Natural killer cell (primary cell): ENCODE measurements at regions of chr14 and their contacts with region 1.

Region 1: DNA sequence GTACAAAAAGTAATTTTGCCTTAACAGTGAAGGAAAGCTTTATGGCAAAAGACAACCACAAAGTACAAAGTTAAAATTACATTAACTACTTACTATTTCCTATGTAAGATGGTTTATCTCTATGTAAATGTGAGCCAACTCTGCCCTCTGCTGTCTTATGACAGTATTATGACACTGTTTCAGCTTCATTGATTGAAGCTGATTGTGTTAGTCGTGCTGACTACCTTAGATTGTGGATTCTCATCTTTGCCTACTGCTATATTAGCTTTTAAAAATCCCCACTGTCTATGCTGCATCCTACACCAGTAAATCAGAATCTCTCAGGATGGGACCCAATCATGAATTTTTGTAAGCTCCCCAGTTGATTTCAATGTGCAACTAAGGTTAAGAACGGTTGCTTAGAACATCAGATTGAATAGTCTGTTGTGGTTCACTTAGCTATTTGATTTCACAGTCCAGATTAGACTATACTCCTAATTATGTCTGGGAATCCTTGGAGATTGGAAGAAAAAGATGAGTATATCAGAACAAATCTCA is 12.2 kb upstream of the SPTB start:
- DNase-seq: peak in 1 of 2 donors; percentile 82
- ATAC-seq: peak; percentile 74 to 88 (median 85)
- H3K4me3 ChIP-seq: no peak overlapping the region
- H3K4me3 Mint-ChIP-seq: no peak overlapping the region
- H3K27ac ChIP-seq: no peak overlapping the region
- H3K27ac Mint-ChIP-seq: no peak overlapping the region
- H3K4me1 ChIP-seq: no peaks in the 10 kb centered on the region
- H3K4me1 Mint-ChIP-seq: peaks cover 0 to 5% of the 10 kb centered on the region in 2 donors
- H3K27me3 ChIP-seq: no peaks in the 10 kb centered on the region
- H3K27me3 Mint-ChIP-seq: peaks cover 6 to 13% of the 10 kb centered on the region in 2 donors
- CTCF ChIP-seq: peak; percentile 71

Region 2: DNA sequence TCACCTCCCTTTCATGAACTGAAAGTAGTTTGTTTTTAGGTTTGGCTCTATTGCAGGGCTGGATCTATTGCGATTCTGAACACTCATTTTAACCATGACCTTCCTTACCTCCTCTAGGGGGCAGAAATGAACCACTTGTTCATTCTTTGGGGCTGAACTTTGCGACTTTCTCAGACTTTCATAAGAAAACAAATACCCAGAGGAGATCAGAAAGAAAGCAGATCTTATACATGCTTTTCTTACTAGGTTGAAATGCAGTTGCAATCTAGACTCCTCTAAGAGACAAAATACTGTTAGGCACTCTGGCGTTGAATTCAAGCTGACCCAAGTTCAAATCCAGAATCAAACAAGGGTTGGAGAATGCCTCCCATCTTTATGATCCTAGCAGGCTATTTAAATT is 220.3 kb before region 1 on chr14:
- intact Hi-C with region 1: loop called (anchors 5 kb)
- DNase-seq: peak in 1 of 2 donors; percentile 80
- ATAC-seq: peak; percentile 54 to 70 (median 58)
- H3K4me3 ChIP-seq: no peak overlapping the region
- H3K4me3 Mint-ChIP-seq: peak overlapping the region; percentile 13
- H3K27ac ChIP-seq: no peak overlapping the region
- H3K27ac Mint-ChIP-seq: peak overlapping the region in 1 of 2 donors; percentile 61
- H3K4me1 ChIP-seq: peaks cover 34% of the 10 kb centered on the region
- H3K4me1 Mint-ChIP-seq: peaks cover 30 to 31% of the 10 kb centered on the region in 2 donors
- H3K27me3 ChIP-seq: no peaks in the 10 kb centered on the region
- H3K27me3 Mint-ChIP-seq: peaks cover 0 to 2% of the 10 kb centered on the region in 2 donors
- CTCF ChIP-seq: peak; percentile 69

Region 3: GRCh38 chr14:64823305-64823861 is 68.5 kb before region 1 on chr14:
- intact Hi-C with region 1: loop called (anchors 5 kb)
- DNase-seq: peak; percentile 60 to 81
- ATAC-seq: peak; percentile 84 to 96 (median 95)
- H3K4me3 ChIP-seq: no peak overlapping the region
- H3K4me3 Mint-ChIP-seq: no peak overlapping the region
- H3K27ac ChIP-seq: no peak overlapping the region
- H3K27ac Mint-ChIP-seq: peak overlapping the region in 1 of 2 donors; percentile 27
- H3K4me1 ChIP-seq: peaks cover 7% of the 10 kb centered on the region
- H3K4me1 Mint-ChIP-seq: peaks cover 6 to 7% of the 10 kb centered on the region in 2 donors
- H3K27me3 ChIP-seq: peaks cover 3% of the 10 kb centered on the region
- H3K27me3 Mint-ChIP-seq: peaks cover 26 to 35% of the 10 kb centered on the region in 2 donors
- CTCF ChIP-seq: peak; percentile 71

Region 4: GRCh38 chr14:64914237-64914971 is 22.5 kb after region 1 on chr14 and contains the start of gene CHURC1:
- intact Hi-C with region 1: no loop called
- DNase-seq: peak; percentile 88 to 100
- ATAC-seq: peak; percentile 81 to 90 (median 82)
- H3K4me3 ChIP-seq: peak within 1 kb of the TSS; percentile 65
- H3K4me3 Mint-ChIP-seq: peak within 1 kb of the TSS; percentile 96
- H3K27ac ChIP-seq: peak within 1 kb of the TSS; percentile 95
- H3K27ac Mint-ChIP-seq: peak within 1 kb of the TSS; percentile 97 to 98
- H3K4me1 ChIP-seq: peaks cover 14% of the 10 kb centered on the region
- H3K4me1 Mint-ChIP-seq: peaks cover 41 to 50% of the 10 kb centered on the region in 2 donors
- H3K27me3 ChIP-seq: no peaks in the 10 kb centered on the region
- H3K27me3 Mint-ChIP-seq: peaks cover 0 to 3% of the 10 kb centered on the region in 2 donors
- CTCF ChIP-seq: no peak
- total RNA-seq, gene CHURC1: 56.1 to 65.5 (median 65.4) TPM